ENCODE measurements at regions of chr5 and their contacts with region 1.

Region 1: DNA sequence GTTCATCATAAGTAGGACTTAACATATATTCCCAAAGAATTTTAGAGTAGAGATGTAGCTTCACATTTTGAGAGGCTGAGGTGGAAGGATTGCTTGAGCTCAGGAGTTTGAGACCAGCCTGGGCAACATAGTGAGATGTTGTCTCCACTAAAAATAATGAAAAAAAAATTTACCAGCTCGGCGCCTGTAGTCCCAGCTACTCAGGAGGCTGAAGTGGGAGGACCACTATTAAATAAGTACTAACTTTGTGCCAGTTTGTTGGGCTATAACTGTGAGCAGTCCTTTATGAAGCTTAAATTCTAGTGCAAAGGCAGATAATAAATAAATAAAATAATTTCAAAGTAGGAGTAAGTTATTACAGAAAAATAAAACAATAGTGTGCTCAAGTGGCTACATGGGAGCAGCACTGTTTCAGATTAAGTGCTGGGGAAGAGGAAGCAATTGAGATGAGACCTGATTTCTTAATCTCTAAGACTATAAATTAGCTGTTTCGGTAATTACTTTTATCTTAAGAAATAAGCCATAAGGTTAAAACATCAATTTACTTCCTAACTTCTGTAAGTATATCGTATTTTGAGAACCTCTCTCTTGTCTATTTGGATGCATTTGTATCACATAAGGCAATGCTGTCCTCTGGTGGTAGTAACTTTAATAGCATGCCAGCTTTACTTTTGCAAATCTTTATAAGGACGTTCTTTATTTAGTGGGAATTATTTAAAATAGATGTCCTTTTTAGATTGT is 98.9 kb downstream of the CSNK1G3 start:
- DNase-seq: peak; percentile 38
- H3K4me3 Mint-ChIP-seq: no peak overlapping the region
- H3K27ac Mint-ChIP-seq: no peak overlapping the region
- H3K4me1 Mint-ChIP-seq: no peaks in the 10 kb centered on the region
- H3K27me3 Mint-ChIP-seq: no peaks in the 10 kb centered on the region

Region 2: GRCh38 chr5:122704243-122705036 is 906.4 kb before region 1 on chr5:
- CTCF ChIA-PET with region 1: interaction called, 7 read pairs
- intact Hi-C with region 1: loop called (anchors 10 kb)
- DNase-seq: no peak
- H3K4me3 Mint-ChIP-seq: no peak overlapping the region
- H3K27ac Mint-ChIP-seq: no peak overlapping the region
- H3K4me1 Mint-ChIP-seq: peaks cover 4% of the 10 kb centered on the region
- H3K27me3 Mint-ChIP-seq: peaks cover 3% of the 10 kb centered on the region

Region 3: DNA sequence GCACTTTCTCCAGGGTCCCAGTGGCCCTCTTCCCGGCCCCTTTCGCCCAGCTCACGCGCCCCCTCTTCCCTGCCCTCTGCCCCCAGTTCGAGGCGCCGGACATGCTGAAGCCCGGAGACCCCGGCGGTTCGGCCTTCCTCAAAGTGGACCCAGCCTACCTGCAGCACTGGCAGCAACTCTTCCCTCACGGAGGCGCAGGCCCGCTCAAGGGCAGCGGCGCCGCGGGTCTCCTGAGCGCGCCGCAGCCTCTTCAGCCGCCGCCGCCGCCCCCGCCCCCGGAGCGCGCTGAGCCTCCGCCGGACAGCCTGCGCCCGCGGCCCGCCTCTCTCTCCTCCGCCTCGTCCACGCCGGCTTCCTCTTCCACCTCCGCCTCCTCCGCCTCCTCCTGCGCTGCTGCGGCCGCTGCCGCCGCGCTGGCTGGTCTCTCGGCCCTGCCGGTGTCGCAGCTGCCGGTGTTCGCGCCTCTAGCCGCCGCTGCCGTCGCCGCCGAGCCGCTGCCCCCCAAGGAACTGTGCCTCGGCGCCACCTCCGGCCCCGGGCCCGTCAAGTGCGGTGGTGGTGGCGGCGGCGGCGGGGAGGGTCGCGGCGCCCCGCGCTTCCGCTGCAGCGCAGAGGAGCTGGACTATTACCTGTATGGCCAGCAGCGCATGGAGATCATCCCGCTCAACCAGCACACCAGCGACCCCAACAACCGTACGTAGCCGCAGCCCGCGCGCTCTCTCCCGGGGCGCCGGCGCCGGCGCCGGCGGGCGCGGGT is 520.7 kb before region 1 on chr5:
- CTCF ChIA-PET with region 1: no interaction called
- intact Hi-C with region 1: loop called (anchors 5 kb)
- DNase-seq: no peak
- H3K4me3 Mint-ChIP-seq: no peak overlapping the region
- H3K27ac Mint-ChIP-seq: no peak overlapping the region
- H3K4me1 Mint-ChIP-seq: peaks cover 30% of the 10 kb centered on the region
- H3K27me3 Mint-ChIP-seq: peaks cover 72% of the 10 kb centered on the region

Region 4: GRCh38 chr5:123350742-123351141 is 260.1 kb before region 1 on chr5:
- CTCF ChIA-PET with region 1: no interaction called
- intact Hi-C with region 1: no loop called
- DNase-seq: no peak
- H3K4me3 Mint-ChIP-seq: no peak overlapping the region
- H3K27ac Mint-ChIP-seq: no peak overlapping the region
- H3K4me1 Mint-ChIP-seq: no peaks in the 10 kb centered on the region
- H3K27me3 Mint-ChIP-seq: no peaks in the 10 kb centered on the region

Region 5: GRCh38 chr5:123378695-123379094 is 232.1 kb before region 1 on chr5:
- CTCF ChIA-PET with region 1: interaction called, 4 read pairs
- intact Hi-C with region 1: loop called (anchors 5 kb)
- DNase-seq: no peak
- H3K4me3 Mint-ChIP-seq: no peak overlapping the region
- H3K27ac Mint-ChIP-seq: no peak overlapping the region
- H3K4me1 Mint-ChIP-seq: no peaks in the 10 kb centered on the region
- H3K27me3 Mint-ChIP-seq: no peaks in the 10 kb centered on the region

Region 6: GRCh38 chr5:123460296-123460729 is 150.5 kb before region 1 on chr5:
- CTCF ChIA-PET with region 1: interaction called, 3 read pairs
- intact Hi-C with region 1: loop called (anchors 1 kb)
- DNase-seq: peak; percentile 81
- H3K4me3 Mint-ChIP-seq: peak overlapping the region; percentile 10
- H3K27ac Mint-ChIP-seq: peak overlapping the region; percentile 90
- H3K4me1 Mint-ChIP-seq: peaks cover 20% of the 10 kb centered on the region
- H3K27me3 Mint-ChIP-seq: no peaks in the 10 kb centered on the region

Region 7: GRCh38 chr5:123545506-123545905 is 65.3 kb before region 1 on chr5:
- CTCF ChIA-PET with region 1: no interaction called
- intact Hi-C with region 1: loop called (anchors 2 kb)
- DNase-seq: peak; percentile 57
- H3K4me3 Mint-ChIP-seq: no peak overlapping the region
- H3K27ac Mint-ChIP-seq: no peak overlapping the region
- H3K4me1 Mint-ChIP-seq: peaks cover 45% of the 10 kb centered on the region
- H3K27me3 Mint-ChIP-seq: no peaks in the 10 kb centered on the region